RWPE1 (cell line): ENCODE measurements at regions of chr2 and their contacts with region 1.

Region 1: GRCh38 chr2:170361090-170361936 is 183.4 kb downstream of the MYO3B start:
- DNase-seq: peak; percentile 36
- H3K27ac ChIP-seq: no peak overlapping the region
- CTCF ChIP-seq: peak; percentile 75

Region 2: GRCh38 chr2:170212625-170213280 is 148.6 kb before region 1 on chr2:
- CTCF ChIA-PET with region 1: no interaction called
- POLR2A ChIA-PET with region 1: no interaction called
- DNase-seq: no peak
- H3K27ac ChIP-seq: no peak overlapping the region
- CTCF ChIP-seq: no peak

Region 3: DNA sequence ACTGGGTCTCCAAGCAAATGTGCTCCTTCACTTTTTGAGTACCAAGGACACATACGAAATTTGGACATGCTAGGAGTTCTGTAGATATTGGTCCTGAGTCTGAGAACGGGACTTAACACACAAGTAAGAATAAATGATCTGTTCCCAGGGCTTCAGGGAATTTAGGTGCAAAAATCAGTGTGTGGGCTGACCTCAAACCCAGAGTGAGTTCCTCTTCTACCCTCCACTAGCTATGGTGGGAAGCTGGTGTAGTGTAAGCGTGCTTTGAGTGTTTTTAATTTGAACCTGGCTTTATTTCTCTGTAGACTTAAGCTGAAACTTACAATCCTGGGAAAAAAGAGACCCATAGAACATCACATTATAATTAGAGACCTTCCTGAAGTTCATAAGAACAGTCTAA is 132.9 kb before region 1 on chr2:
- CTCF ChIA-PET with region 1: no interaction called
- POLR2A ChIA-PET with region 1: interaction called, 18 read pairs
- DNase-seq: no peak
- H3K27ac ChIP-seq: no peak overlapping the region
- CTCF ChIP-seq: no peak

Region 4: GRCh38 chr2:170324640-170325046 is 36.7 kb before region 1 on chr2:
- CTCF ChIA-PET with region 1: interaction called, 10 read pairs
- POLR2A ChIA-PET with region 1: no interaction called
- DNase-seq: peak; percentile 30
- H3K27ac ChIP-seq: no peak overlapping the region
- CTCF ChIP-seq: peak; percentile 69